ENCODE measurements at regions of chr17 and their contacts with region 1.

Region 1: GRCh38 chr17:52024300-52024870 is 134.1 kb downstream of the CA10 start:
- DNase-seq: no peak
- H3K4me3 Mint-ChIP-seq: no peak overlapping the region
- H3K27ac Mint-ChIP-seq: no peak overlapping the region
- H3K4me1 Mint-ChIP-seq: no peaks in the 10 kb centered on the region
- H3K27me3 Mint-ChIP-seq: no peaks in the 10 kb centered on the region

Region 2: GRCh38 chr17:51992864-51993416 is 31.4 kb before region 1 on chr17:
- intact Hi-C with region 1: loop called (anchors 5 kb)
- DNase-seq: no peak
- H3K4me3 Mint-ChIP-seq: no peak overlapping the region
- H3K27ac Mint-ChIP-seq: no peak overlapping the region
- H3K4me1 Mint-ChIP-seq: no peaks in the 10 kb centered on the region
- H3K27me3 Mint-ChIP-seq: no peaks in the 10 kb centered on the region

Region 3: DNA sequence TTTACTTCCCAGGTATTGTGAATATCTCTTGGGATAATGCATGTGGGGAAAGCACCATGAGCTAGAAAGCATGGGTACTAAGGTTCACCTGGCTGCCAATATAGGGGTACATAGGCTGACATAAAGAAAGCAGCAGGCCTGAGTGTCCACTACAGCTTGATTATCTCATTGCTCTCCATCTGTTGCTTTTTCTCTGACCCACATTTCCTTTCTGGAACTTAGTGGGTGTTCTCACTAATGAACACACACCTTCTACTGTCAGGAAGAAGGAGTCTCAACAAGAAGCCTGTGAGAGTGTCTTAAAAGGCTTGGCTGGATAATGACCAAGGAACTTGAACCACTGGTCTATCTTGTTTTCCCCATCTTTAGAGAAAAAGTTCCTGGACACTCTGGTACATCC is 71.7 kb after region 1 on chr17:
- intact Hi-C with region 1: no loop called
- DNase-seq: no peak
- H3K4me3 Mint-ChIP-seq: no peak overlapping the region
- H3K27ac Mint-ChIP-seq: no peak overlapping the region
- H3K4me1 Mint-ChIP-seq: no peaks in the 10 kb centered on the region
- H3K27me3 Mint-ChIP-seq: no peaks in the 10 kb centered on the region

Measured in activated T-helper 2 cell treated with anti-CD3 and anti-CD28 coated beads, Interferon-gamma antibody, Interleukin-2, Interleukin-4, amounts not matched to agents 10 μg/mL and 5 μg/mL and 100 μg/mL, durations not matched to agents 14 hours and 24 hours and 36 hours (primary cell).